GM12878 (cell line): ENCODE measurements at regions of chr7 and their contacts with region 1.

Region 1: DNA sequence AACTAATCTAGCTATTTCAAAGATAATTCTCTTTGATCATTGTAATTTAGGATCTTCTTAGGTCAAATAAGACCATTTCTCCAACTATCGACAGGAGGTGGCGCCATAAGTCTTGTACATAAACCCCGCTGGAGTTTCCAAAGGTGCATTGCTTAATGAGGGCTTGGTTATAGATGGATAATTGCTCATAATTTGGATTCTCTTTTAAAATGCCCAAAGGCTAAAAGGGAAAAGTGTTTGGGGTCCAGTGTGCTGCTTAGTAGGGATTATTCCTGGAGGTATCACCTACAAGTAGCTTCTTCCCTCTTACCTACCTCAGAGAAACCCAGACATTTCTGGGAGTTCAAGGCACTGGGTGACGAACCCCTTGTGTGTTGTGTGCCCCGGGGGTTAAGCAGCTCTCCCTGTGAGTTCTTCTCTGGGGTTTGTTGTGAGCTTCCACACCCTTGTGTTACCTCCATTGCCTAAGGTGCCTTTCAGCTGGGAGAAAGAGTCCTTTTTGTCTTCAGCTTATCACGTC is 75.2 kb downstream of the PAXIP1 start:
- DNase-seq: peak; percentile 39
- ATAC-seq: peak; percentile 87
- H3K4me3 ChIP-seq: peak overlapping the region; percentile 66
- H3K27ac ChIP-seq: peak overlapping the region; percentile 82
- H3K4me1 ChIP-seq: peaks cover 4% of the 10 kb centered on the region; the same call in 1 of the 2 replicates
- H3K27me3 ChIP-seq: no peaks in the 10 kb centered on the region
- CTCF ChIP-seq: peak; percentile 61 to 76 (median 62)
- EP300 ChIP-seq: no peak
- POLR2A ChIP-seq: no peak
- RAD21 ChIP-seq: peak; percentile 91

Region 2: DNA sequence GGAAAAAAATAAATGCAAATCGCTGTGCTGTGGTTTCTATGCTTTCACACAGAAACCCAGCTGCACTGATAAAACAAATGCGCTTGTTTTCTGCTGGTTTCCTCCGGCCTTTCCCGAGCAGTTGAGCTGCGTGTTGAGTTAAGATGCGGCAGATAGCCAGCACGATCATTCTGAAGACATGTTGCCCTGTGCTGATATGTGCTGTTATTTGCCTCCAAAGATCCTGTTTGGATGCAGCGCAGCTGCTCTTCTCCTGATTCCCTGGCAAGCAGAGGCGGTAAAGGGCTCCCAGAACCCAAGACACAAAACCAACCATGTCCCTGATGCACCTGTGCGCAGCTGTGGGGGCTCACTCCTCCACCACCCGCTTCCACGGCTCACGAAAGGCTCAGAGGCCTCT is 150.2 kb before region 1 on chr7:
- CTCF ChIA-PET with region 1: no interaction called
- POLR2A ChIA-PET with region 1: no interaction called
- RAD21 ChIA-PET with region 1: no interaction called
- SMC1A ChIA-PET with region 1: no interaction called
- in situ Hi-C with region 1: no loop called
- intact Hi-C with region 1: no loop called
- DNase-seq: no peak
- ATAC-seq: no peak
- H3K4me3 ChIP-seq: no peak overlapping the region
- H3K27ac ChIP-seq: no peak overlapping the region
- H3K4me1 ChIP-seq: no peaks in the 10 kb centered on the region
- H3K27me3 ChIP-seq: no peaks in the 10 kb centered on the region
- CTCF ChIP-seq: no peak
- EP300 ChIP-seq: no peak
- POLR2A ChIP-seq: no peak
- RAD21 ChIP-seq: no peak

Region 3: GRCh38 chr7:154832557-154833138 is 95.0 kb before region 1 on chr7:
- CTCF ChIA-PET with region 1: interaction called, 20 read pairs
- POLR2A ChIA-PET with region 1: no interaction called
- RAD21 ChIA-PET with region 1: interaction called, 4 read pairs
- SMC1A ChIA-PET with region 1: interaction called, 11 read pairs
- in situ Hi-C with region 1: no loop called
- intact Hi-C with region 1: loop called (anchors 2 kb)
- DNase-seq: no peak
- ATAC-seq: peak; percentile 86
- H3K4me3 ChIP-seq: no peak overlapping the region
- H3K27ac ChIP-seq: no peak overlapping the region
- H3K4me1 ChIP-seq: peaks cover 4% of the 10 kb centered on the region
- H3K27me3 ChIP-seq: no peaks in the 10 kb centered on the region; a peak in 1 of 4 replicates
- CTCF ChIP-seq: peak; percentile 32 to 65 (median 38); a peak in 4 of 6 replicates
- EP300 ChIP-seq: no peak
- POLR2A ChIP-seq: no peak
- RAD21 ChIP-seq: peak; percentile 52

Region 4: GRCh38 chr7:154953006-154953684 is 25.5 kb after region 1 on chr7:
- CTCF ChIA-PET with region 1: interaction called, 79 read pairs
- POLR2A ChIA-PET with region 1: interaction called, 3 read pairs
- RAD21 ChIA-PET with region 1: interaction called, 23 read pairs
- SMC1A ChIA-PET with region 1: interaction called, 25 read pairs
- in situ Hi-C with region 1: no loop called
- intact Hi-C with region 1: no loop called
- DNase-seq: no peak
- ATAC-seq: peak; percentile 87
- H3K4me3 ChIP-seq: no peak overlapping the region
- H3K27ac ChIP-seq: no peak overlapping the region
- H3K4me1 ChIP-seq: no peaks in the 10 kb centered on the region
- H3K27me3 ChIP-seq: no peaks in the 10 kb centered on the region
- CTCF ChIP-seq: peak; percentile 54 to 68 (median 63)
- EP300 ChIP-seq: no peak
- POLR2A ChIP-seq: no peak
- RAD21 ChIP-seq: 0 out of 2 replicates have a peak, but pooled peaks have one; percentile 25

Region 5: DNA sequence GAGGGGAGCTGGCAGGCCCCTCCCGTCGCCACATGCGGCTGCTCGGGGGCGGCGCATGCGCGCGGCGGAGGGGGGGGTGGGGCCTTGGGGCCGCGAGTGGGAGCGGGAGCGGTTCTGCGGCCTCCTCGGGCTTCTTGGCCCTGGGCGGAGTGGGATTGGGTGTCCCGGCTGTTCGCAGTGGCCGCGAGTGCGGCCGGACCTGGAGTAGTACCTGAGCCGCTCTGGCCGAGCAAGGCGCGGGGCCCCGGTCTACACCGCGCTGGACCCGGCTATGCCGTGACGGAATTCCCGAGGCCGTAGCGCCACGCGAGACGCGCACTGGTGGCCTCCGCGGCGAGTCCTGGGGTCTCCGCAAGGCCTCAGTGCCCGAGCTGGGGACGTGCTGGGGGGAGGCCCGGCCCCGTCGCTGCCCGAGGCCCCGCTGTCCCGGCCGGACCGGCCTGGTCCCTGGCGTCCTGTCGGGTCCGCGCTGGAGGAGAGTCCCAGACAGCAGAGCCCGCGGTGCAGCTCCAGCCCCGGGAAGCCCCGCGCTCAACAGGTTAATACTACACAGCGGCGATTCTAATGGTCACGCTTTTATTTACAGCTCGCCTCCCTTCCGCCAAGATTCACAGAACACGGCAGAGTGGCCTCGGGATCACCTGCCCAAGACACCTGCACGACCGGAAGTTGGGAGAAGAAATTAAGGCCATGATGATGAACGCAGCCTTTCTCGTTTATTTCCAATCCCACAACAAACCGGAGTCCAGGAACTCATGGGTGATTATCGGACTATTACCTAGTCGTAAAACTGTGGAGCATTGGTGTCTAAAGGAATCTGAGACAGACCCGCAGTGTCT is 75.9 kb after region 1 on chr7:
- CTCF ChIA-PET with region 1: interaction called, 97 read pairs
- POLR2A ChIA-PET with region 1: interaction called, 6 read pairs
- RAD21 ChIA-PET with region 1: interaction called, 56 read pairs
- SMC1A ChIA-PET with region 1: interaction called, 44 read pairs
- in situ Hi-C with region 1: no loop called
- intact Hi-C with region 1: loop called (anchors 1 kb)
- DNase-seq: no peak
- ATAC-seq: peak; percentile 75
- H3K4me3 ChIP-seq: peak overlapping the region; percentile 77
- H3K27ac ChIP-seq: peak overlapping the region; percentile 93
- H3K4me1 ChIP-seq: 0 out of 2 replicates have a peak, but pooled peaks cover 5% of the 10 kb centered on the region
- H3K27me3 ChIP-seq: no peaks in the 10 kb centered on the region
- CTCF ChIP-seq: no peak
- EP300 ChIP-seq: no peak
- POLR2A ChIP-seq: peak; percentile 87
- RAD21 ChIP-seq: no peak

Region 6: DNA sequence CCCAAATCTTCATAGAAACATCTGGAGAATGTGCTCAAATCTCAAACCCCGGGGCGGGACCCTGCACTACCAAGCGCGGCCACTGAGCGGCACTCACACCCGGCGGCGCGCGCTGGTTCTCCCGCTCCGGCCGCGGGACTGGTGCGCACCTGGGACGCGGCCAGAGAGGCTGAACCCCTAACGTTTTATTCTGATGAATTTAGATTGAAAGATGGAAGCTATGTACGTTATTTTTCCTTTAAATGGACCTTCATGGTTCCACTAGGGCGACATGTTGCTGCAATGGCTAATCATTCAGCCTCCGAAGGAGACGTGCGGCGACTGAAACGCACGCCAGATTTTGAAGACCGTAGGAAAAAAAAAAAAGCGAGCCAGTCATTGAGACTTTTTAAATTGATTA is 263.0 kb after region 1 on chr7:
- CTCF ChIA-PET with region 1: interaction called, 25 read pairs
- POLR2A ChIA-PET with region 1: no interaction called
- RAD21 ChIA-PET with region 1: no interaction called
- SMC1A ChIA-PET with region 1: interaction called, 14 read pairs
- in situ Hi-C with region 1: no loop called
- intact Hi-C with region 1: no loop called
- DNase-seq: no peak
- ATAC-seq: peak; percentile 80
- H3K4me3 ChIP-seq: no peak overlapping the region
- H3K27ac ChIP-seq: no peak overlapping the region
- H3K4me1 ChIP-seq: peaks cover 7% of the 10 kb centered on the region; the same call in 1 of the 2 replicates
- H3K27me3 ChIP-seq: no peaks in the 10 kb centered on the region
- CTCF ChIP-seq: peak; percentile 76 to 91 (median 82)
- EP300 ChIP-seq: no peak
- POLR2A ChIP-seq: no peak
- RAD21 ChIP-seq: peak; percentile 93

Region 7: DNA sequence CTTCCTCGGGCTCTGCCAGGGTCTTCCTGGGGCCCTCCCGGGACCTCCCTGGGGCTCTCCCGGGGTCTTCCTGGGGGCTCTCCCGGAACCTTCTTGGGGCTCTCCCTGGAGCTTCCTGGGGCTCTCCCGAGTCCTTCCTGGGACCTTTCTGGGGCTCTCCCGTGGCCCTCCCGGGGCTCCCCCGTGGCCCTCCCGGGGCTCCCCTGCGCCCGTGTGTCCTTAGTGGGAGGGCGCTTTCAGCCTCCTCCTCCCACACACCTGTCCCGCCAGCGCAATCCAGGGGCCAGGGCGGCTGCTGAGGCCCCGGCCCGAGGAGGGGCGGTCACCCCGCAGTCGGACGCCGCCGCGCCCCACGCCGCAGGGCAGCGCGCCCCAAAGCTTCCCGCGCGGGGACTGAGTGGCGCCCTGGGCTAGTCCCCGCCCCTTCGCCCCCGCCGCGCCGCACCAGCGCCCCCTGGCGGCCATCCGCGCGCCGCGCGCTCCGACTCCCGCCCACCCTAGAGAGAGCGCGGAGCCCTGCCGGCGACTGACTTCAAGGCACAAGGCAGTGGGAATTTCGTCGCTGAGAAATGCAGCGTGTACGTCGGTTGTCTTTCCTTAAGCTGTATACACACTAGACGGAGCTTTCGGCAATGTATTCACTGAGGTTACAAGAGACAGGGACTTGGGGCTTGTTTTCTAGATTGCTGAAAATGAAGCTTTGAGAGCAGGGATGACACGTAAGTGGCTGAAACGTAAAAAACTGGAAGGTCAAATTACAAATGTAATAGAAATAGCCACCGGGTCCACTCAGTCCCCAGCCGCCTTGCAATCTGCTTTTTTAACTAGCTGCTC is 417.1 kb after region 1 on chr7:
- CTCF ChIA-PET with region 1: interaction called, 43 read pairs
- POLR2A ChIA-PET with region 1: no interaction called
- RAD21 ChIA-PET with region 1: interaction called, 39 read pairs
- SMC1A ChIA-PET with region 1: interaction called, 31 read pairs
- in situ Hi-C with region 1: loop called (anchors 5 kb)
- intact Hi-C with region 1: loop called (anchors 1 kb)
- DNase-seq: no peak
- ATAC-seq: peak; percentile 98
- H3K4me3 ChIP-seq: peak overlapping the region; percentile 63; the same call in 1 of the 2 replicates
- H3K27ac ChIP-seq: no peak overlapping the region
- H3K4me1 ChIP-seq: peaks cover 5% of the 10 kb centered on the region; the same call in 1 of the 2 replicates
- H3K27me3 ChIP-seq: no peaks in the 10 kb centered on the region
- CTCF ChIP-seq: peak; percentile 71 to 73 (median 72); a peak in 5 of 6 replicates
- EP300 ChIP-seq: no peak
- POLR2A ChIP-seq: peak; percentile 29; the same call in 1 of the 2 replicates
- RAD21 ChIP-seq: peak; percentile 90

Region 8: GRCh38 chr7:155598810-155599210 is 671.1 kb after region 1 on chr7:
- CTCF ChIA-PET with region 1: interaction called, 11 read pairs
- POLR2A ChIA-PET with region 1: no interaction called
- RAD21 ChIA-PET with region 1: interaction called, 6 read pairs
- SMC1A ChIA-PET with region 1: interaction called, 8 read pairs
- in situ Hi-C with region 1: no loop called
- intact Hi-C with region 1: no loop called
- DNase-seq: peak; percentile 21
- ATAC-seq: peak; percentile 95
- H3K4me3 ChIP-seq: no peak overlapping the region
- H3K27ac ChIP-seq: no peak overlapping the region
- H3K4me1 ChIP-seq: no peaks in the 10 kb centered on the region
- H3K27me3 ChIP-seq: no peaks in the 10 kb centered on the region
- CTCF ChIP-seq: peak; percentile 93 to 96 (median 95); a peak in 5 of 6 replicates
- EP300 ChIP-seq: no peak
- POLR2A ChIP-seq: no peak
- RAD21 ChIP-seq: peak; percentile 90